ENCODE measurements at regions of chr14 and their contacts with region 1.

Region 1: GRCh38 chr14:71739273-71739937 is 192.8 kb upstream of the RGS6 start:
- DNase-seq: no peak
- ATAC-seq: no peak
- H3K4me3 ChIP-seq: no peak overlapping the region
- H3K4me3 Mint-ChIP-seq: no peak overlapping the region
- H3K27ac ChIP-seq: no peak overlapping the region
- H3K27ac Mint-ChIP-seq: peak overlapping the region in 3 of 9 donors; percentile 21 to 31 (median 29)
- H3K4me1 ChIP-seq: no peaks in the 10 kb centered on the region
- H3K4me1 Mint-ChIP-seq: peaks cover 0 to 10% (median 0%) of the 10 kb centered on the region in 7 donors
- H3K27me3 ChIP-seq: no peaks in the 10 kb centered on the region
- H3K27me3 Mint-ChIP-seq: no peaks in the 10 kb centered on the region

Region 2: GRCh38 chr14:71339650-71340415 is 399.6 kb before region 1 on chr14:
- CTCF ChIA-PET with region 1: no interaction called
- POLR2A ChIA-PET with region 1: no interaction called
- intact Hi-C with region 1: loop called in 1 of 2 experiments (anchors 5 kb)
- DNase-seq: no peak
- ATAC-seq: no peak
- H3K4me3 ChIP-seq: no peak overlapping the region
- H3K4me3 Mint-ChIP-seq: no peak overlapping the region
- H3K27ac ChIP-seq: no peak overlapping the region
- H3K27ac Mint-ChIP-seq: no peak overlapping the region
- H3K4me1 ChIP-seq: no peaks in the 10 kb centered on the region
- H3K4me1 Mint-ChIP-seq: peaks cover 7 to 61% (median 29%) of the 10 kb centered on the region in 7 donors
- H3K27me3 ChIP-seq: no peaks in the 10 kb centered on the region
- H3K27me3 Mint-ChIP-seq: no peaks in the 10 kb centered on the region